ENCODE measurements at regions of chr6 and their contacts with region 1.

Region 1: DNA sequence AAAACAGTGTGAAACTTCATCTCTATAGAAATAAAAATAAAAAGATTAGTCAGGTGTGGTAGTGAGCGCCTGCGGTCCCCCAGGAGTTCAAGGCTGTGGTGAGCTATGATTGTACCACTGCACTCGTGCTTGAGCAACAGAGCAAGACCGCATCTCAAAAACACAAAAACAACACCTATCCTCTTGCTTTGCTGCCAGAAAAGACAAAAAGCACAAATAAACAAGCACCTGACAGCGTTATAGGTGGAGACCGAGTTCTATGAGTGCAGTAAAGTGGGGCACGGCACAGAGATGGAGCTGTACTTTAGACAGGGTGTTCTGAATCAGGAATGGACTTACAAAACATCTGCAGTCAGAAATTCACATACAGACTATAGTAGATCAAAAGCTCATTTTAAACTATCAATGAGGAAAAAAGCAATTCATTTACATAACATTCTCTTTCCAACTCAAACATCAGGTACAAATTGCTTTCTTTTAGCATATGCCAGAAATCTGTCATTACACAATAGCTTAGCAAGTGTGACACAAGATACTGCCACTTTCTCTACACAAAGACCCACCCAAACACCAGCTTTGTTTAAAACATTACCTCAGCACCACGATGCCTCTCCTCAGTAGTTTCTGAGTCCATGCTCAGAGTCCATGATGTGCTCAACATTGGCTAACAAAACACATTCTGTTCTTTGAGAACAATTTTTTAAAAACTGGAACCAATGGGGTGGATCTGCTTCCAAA is 10.1 kb downstream of the EZR start:
- DNase-seq: peak; percentile 80
- ATAC-seq: peak; percentile 69
- H3K4me3 ChIP-seq: peak overlapping the region; percentile 29; the same call in 1 of the 2 replicates
- H3K27ac ChIP-seq: peak overlapping the region; percentile 54
- H3K4me1 ChIP-seq: peaks cover 76% of the 10 kb centered on the region
- H3K27me3 ChIP-seq: no peaks in the 10 kb centered on the region
- CTCF ChIP-seq: no peak
- EP300 ChIP-seq: peak; percentile 75 to 91
- POLR2A ChIP-seq: no peak
- RAD21 ChIP-seq: no peak

Region 2: GRCh38 chr6:158631678-158632537 is 177.2 kb before region 1 on chr6:
- CTCF ChIA-PET with region 1: no interaction called
- POLR2A ChIA-PET with region 1: no interaction called
- RAD21 ChIA-PET with region 1: no interaction called
- SMC1A ChIA-PET with region 1: no interaction called
- in situ Hi-C with region 1: no loop called
- intact Hi-C with region 1: no loop called
- DNase-seq: no peak
- ATAC-seq: no peak
- H3K4me3 ChIP-seq: no peak overlapping the region
- H3K27ac ChIP-seq: no peak overlapping the region
- H3K4me1 ChIP-seq: no peaks in the 10 kb centered on the region
- H3K27me3 ChIP-seq: no peaks in the 10 kb centered on the region
- CTCF ChIP-seq: no peak
- EP300 ChIP-seq: no peak
- POLR2A ChIP-seq: no peak
- RAD21 ChIP-seq: no peak

Region 3: GRCh38 chr6:158718461-158719046 is 90.6 kb before region 1 on chr6:
- CTCF ChIA-PET with region 1: interaction called, 8 read pairs
- POLR2A ChIA-PET with region 1: interaction called, 3 read pairs
- RAD21 ChIA-PET with region 1: interaction called, 10 read pairs
- SMC1A ChIA-PET with region 1: interaction called, 25 read pairs
- in situ Hi-C with region 1: no loop called
- intact Hi-C with region 1: loop called (anchors 5 kb)
- DNase-seq: no peak
- ATAC-seq: no peak
- H3K4me3 ChIP-seq: no peak overlapping the region
- H3K27ac ChIP-seq: 0 out of 2 replicates have a peak overlapping the region, but pooled peaks have one; percentile 79
- H3K4me1 ChIP-seq: peaks cover 50% of the 10 kb centered on the region
- H3K27me3 ChIP-seq: no peaks in the 10 kb centered on the region
- CTCF ChIP-seq: peak in 2 of 3 experiments; percentile 29 to 61; a peak in 4 of 6 replicates
- EP300 ChIP-seq: no peak
- POLR2A ChIP-seq: no peak
- RAD21 ChIP-seq: peak; percentile 57

Region 4: DNA sequence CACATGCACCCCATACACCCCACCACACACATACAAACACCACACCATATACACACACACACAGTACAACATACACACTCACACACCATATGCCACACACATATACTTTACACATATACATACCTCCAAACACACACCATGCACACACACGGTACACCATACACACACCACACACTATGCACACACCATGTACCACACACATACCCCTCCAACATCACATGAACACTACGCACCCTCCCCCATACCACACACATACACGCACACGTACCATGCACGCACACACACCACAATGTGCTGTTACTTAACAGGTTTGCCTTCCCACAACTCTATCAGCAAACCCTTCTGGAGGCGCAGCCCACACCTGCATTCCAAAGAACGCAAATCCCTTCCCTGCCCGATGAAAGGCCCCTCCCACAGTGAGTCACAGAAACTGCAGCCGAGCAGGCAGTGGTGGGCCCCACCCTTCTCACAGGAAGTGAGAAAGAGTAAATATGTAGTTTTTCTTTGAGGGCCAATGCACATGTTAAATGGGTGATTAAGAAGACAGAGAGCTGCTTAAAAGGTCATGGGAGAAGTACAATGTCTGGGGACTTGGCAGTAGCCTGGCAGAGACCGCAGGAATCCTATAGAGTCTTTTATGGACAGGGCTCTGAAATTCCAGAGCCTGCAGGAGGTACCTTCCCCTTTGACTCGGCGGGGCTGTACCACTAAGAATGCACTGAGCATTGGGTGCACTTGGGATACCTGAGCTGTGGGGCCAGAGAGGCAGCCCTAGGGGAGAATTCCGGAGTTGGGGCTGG is 44.2 kb after region 1 on chr6:
- CTCF ChIA-PET with region 1: no interaction called
- POLR2A ChIA-PET with region 1: no interaction called
- RAD21 ChIA-PET with region 1: interaction called, 7 read pairs
- SMC1A ChIA-PET with region 1: interaction called, 10 read pairs
- in situ Hi-C with region 1: no loop called
- intact Hi-C with region 1: no loop called
- DNase-seq: peak; percentile 50
- ATAC-seq: peak; percentile 94
- H3K4me3 ChIP-seq: peak overlapping the region; percentile 1; the same call in 1 of the 2 replicates
- H3K27ac ChIP-seq: peak overlapping the region; percentile 54
- H3K4me1 ChIP-seq: peaks cover 34% of the 10 kb centered on the region
- H3K27me3 ChIP-seq: no peaks in the 10 kb centered on the region
- CTCF ChIP-seq: no peak
- EP300 ChIP-seq: peak in 1 of 2 experiments; percentile 34; a peak in 1 of 4 replicates
- POLR2A ChIP-seq: no peak
- RAD21 ChIP-seq: peak; percentile 20; the same call in 1 of the 2 replicates

Region 5: GRCh38 chr6:158879180-158879579 is 70.1 kb after region 1 on chr6:
- CTCF ChIA-PET with region 1: no interaction called
- POLR2A ChIA-PET with region 1: no interaction called
- RAD21 ChIA-PET with region 1: no interaction called
- SMC1A ChIA-PET with region 1: no interaction called
- in situ Hi-C with region 1: no loop called
- intact Hi-C with region 1: no loop called
- DNase-seq: no peak
- ATAC-seq: peak; percentile 75
- H3K4me3 ChIP-seq: no peak overlapping the region
- H3K27ac ChIP-seq: no peak overlapping the region
- H3K4me1 ChIP-seq: no peaks in the 10 kb centered on the region
- H3K27me3 ChIP-seq: no peaks in the 10 kb centered on the region
- CTCF ChIP-seq: no peak
- EP300 ChIP-seq: no peak
- POLR2A ChIP-seq: no peak
- RAD21 ChIP-seq: no peak

Region 6: DNA sequence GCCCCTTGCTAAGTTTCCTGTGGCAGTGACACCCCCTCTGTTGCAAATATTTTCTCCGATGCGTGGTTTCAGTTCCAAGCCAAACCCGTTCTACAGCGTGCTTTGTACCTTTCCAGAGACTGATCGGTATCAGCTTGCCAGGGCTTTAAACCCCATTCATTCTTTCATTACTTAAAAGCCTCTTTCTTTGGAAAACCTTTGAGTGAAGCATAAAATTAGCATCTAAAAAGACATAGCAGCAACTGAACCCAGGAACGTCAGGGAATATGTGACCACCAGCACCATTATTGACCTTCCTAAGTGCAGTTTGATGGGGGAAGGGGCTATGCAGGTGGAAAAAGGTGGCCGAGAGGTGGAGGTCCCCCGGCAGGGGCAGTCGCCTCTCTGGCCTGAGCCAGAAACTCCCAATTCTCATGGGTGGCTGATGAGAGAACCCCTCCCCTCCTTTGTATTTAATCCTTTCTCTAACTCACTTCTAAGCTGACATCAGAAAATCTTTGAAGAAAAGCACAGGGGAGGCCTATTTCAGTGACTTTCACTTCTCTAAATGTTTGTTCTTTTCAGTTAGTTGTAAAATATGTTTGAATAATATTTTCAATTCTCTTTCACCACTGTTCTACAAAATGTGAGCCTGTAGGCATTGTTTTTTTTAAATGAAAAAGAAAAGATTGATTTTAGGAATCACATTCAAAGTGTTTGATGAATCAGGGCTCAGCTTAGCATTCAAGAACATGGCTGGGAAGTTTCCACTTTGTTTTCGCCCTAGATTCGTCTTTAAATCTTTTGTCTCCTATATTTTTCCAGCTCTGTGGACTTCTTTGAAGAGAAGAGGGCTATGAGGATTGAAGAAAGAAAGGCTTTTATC is 101.6 kb after region 1 on chr6:
- CTCF ChIA-PET with region 1: interaction called, 5 read pairs
- POLR2A ChIA-PET with region 1: interaction called, 12 read pairs
- RAD21 ChIA-PET with region 1: interaction called, 15 read pairs
- SMC1A ChIA-PET with region 1: interaction called, 19 read pairs
- in situ Hi-C with region 1: no loop called
- intact Hi-C with region 1: loop called (anchors 2 kb)
- DNase-seq: peak; percentile 54
- ATAC-seq: peak; percentile 90
- H3K4me3 ChIP-seq: peak overlapping the region; percentile 56
- H3K27ac ChIP-seq: peak overlapping the region; percentile 99
- H3K4me1 ChIP-seq: peaks cover 33% of the 10 kb centered on the region
- H3K27me3 ChIP-seq: no peaks in the 10 kb centered on the region
- CTCF ChIP-seq: no peak
- EP300 ChIP-seq: peak; percentile 36 to 78; a peak in 3 of 4 replicates
- POLR2A ChIP-seq: peak; percentile 51; the same call in 1 of the 2 replicates
- RAD21 ChIP-seq: peak; percentile 35; the same call in 1 of the 2 replicates

Measured in GM12878 (cell line).